Dorsolateral prefrontal cortex (tissue), 120 donors: ENCODE measurements at regions of chr2 and their contacts with region 1.

Region 1: DNA sequence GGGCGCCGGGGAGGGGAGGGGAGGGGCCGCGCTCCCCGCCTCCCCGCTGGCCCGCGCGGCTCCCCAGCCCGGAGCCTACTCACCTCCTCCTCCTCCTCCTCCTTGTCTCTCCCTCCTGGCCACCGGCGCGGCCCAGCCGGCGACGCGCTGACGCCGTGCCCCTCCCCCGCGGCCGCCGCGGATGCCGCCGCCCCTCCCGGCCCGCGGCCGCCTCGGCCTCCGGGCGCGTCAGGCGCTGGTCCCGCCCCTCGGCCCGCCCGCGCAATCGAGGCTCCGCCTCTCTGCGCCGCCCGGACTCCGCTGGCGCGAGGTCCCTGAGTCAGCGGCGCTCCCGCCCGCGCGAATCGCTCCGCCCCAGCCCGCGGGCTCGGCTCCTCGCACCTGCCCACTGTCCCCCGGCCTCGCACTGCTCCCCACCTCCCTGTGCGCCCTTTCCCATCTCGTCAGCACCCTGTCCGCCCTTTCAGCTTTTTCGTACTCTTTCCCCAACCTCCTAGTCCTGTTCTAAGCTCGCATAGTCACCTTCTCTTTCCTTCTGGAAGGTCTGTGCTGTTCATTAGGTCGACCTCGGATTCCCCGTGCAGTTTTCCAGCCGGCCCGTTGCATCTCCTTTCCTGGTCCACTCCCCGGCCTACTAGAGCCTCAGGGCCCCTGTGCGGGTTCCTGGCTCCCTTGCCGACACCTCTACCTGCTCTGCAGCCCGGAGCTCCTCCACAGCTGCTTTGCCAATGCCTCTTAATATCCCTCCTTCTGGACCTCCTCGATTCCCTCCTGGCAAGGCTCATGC is 187.4 kb downstream of the ZEB2 start:
- DNase-seq: peak; percentile 73 to 95 (median 84)
- H3K4me3 ChIP-seq: peak overlapping the region; percentile 57 to 93 (median 85)
- H3K27ac ChIP-seq: peak overlapping the region; percentile 22 to 98 (median 95)
- H3K27me3 ChIP-seq: no peaks in the 10 kb centered on the region
- CTCF ChIP-seq: no peak

Region 2: DNA sequence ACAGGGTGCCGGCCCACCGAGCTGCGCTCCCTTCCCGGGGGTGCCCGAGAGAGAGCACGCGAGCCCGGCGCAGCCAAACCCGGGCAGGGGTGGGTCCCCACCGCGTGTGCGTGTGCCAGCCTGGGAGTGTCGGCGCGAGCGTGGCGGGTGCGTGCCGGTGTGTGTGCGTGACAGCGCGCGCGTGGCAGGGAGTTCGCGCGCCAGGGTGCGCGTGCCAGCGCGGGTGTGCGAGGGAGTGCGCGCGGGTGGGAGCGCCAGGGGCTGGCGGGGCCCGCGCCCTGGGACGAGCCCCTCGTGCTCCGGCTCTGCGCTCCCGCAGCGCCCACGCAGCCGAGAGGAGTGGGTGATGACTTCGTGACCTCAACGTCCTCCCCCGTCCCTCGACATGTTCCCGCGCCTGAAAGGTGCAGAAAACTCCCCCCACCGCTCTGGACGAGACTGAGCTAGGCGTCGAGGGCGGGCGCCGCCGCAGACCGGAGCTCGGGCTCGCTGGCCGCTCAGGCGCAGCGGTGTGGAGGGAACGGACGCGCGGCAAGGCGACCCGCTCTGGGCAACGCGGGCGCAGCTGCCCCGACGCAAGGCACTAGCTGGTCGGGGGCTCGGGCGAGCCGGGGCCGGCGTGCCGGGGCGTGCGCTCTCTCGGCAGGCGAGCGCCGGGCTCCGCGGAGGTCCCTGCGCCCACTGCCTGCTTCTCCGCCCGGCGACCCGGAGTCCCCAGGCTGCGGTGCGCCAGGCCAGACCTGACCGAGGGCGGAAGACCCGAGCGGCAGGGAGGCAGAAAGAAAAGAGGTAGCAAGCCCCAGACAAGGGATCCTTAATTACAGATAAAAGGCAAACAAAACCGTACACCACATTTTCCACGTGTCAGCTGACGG is 395.5 kb before region 1 on chr2:
- intact Hi-C with region 1: loop called in 1 of 2 experiments (anchors 5 kb)
- DNase-seq: peak in 9 of 10 donors; percentile 8 to 73 (median 60)
- H3K4me3 ChIP-seq: peak overlapping the region; percentile 48 to 78 (median 68)
- H3K27ac ChIP-seq: peak overlapping the region in 58 of 59 donors; percentile 3 to 96 (median 84)
- H3K27me3 ChIP-seq: no peaks in the 10 kb centered on the region
- CTCF ChIP-seq: peak in 1 of 56 donors; percentile 10

Region 3: DNA sequence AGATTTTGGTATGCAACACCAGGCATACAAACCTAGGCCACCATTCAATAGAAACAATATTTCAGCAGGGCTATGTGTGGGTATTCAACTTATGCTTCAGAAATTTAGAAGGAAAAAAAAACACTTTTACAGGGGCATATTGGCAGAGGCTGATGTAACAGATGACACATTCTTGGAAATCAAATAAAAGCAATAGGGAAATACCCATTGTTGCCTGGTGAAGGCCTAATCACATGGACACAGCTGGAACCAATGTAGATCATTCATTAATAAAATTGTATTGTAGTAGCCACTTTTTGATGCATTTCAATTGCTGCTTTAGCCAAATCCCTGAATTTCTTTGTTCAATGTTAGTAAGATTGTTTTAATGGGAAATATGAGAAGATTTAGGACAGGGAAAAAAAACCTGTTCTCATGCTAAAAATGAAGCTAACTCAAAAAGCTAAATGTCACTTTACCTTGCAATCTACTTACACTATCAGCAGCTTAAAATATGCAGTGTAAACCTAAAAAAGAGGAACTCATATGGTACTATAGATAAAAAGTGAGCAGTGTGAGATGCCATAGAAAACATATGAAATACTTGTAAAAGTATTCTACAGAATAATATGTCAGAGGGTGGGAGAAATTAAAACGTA is 102.0 kb before region 1 on chr2:
- intact Hi-C with region 1: loop called in 1 of 2 experiments (anchors 5 kb)
- DNase-seq: no peak
- H3K4me3 ChIP-seq: no peak overlapping the region
- H3K27ac ChIP-seq: peak overlapping the region in 1 of 59 donors; percentile 0
- H3K27me3 ChIP-seq: no peaks in the 10 kb centered on the region
- CTCF ChIP-seq: no peak

Region 4: GRCh38 chr2:144382849-144383248 is 50.3 kb after region 1 on chr2:
- intact Hi-C with region 1: loop called (anchors 10 kb)
- DNase-seq: no peak
- H3K4me3 ChIP-seq: no peak overlapping the region
- H3K27ac ChIP-seq: peak overlapping the region in 41 of 59 donors; percentile 0 to 93 (median 74)
- H3K27me3 ChIP-seq: no peaks in the 10 kb centered on the region
- CTCF ChIP-seq: no peak

Region 5: DNA sequence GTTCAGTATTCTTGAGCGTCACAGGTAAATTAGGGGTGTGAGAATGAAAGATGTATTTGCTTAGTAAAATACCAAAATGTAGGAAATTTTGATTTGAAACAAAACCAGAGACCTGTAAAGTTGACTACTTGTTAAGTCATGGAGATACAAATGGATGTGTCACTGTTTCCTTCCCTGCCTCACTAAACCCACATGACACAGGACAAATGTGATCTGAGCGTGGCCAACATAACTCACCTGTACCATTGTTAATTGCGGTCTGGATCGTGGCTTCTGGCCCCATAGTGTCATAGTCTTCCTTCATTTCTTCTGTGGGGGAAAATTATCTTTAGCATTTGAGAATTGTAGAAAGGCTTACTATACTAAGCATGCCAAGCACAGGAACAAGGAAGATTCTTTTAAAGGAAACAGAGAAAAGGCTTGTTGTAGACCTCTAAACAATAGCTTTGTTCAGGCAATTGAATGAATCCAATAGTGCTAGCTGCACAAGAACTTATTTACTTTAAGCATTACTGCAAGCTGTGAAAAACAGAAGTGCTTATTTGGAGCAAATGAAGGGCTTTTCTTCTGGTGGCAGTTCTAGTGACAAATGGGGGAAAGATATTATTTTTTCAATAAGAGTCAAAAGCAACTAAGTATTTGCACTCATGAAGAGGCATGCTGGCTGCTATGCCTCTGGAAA is 92.2 kb after region 1 on chr2:
- intact Hi-C with region 1: loop called (anchors 1 to 5 kb)
- DNase-seq: no peak
- H3K4me3 ChIP-seq: peak overlapping the region in 23 of 59 donors; percentile 0 to 61 (median 16)
- H3K27ac ChIP-seq: peak overlapping the region; percentile 33 to 99 (median 96)
- H3K27me3 ChIP-seq: no peaks in the 10 kb centered on the region
- CTCF ChIP-seq: peak in 5 of 56 donors; percentile 9 to 28 (median 27)

Region 6: GRCh38 chr2:144430722-144431391 is 98.3 kb after region 1 on chr2:
- intact Hi-C with region 1: loop called in 1 of 2 experiments (anchors 5 kb)
- DNase-seq: peak in 1 of 10 donors; percentile 45
- H3K4me3 ChIP-seq: peak overlapping the region; percentile 7 to 64 (median 44)
- H3K27ac ChIP-seq: peak overlapping the region; percentile 82 to 99 (median 96)
- H3K27me3 ChIP-seq: no peaks in the 10 kb centered on the region
- CTCF ChIP-seq: no peak

Region 7: DNA sequence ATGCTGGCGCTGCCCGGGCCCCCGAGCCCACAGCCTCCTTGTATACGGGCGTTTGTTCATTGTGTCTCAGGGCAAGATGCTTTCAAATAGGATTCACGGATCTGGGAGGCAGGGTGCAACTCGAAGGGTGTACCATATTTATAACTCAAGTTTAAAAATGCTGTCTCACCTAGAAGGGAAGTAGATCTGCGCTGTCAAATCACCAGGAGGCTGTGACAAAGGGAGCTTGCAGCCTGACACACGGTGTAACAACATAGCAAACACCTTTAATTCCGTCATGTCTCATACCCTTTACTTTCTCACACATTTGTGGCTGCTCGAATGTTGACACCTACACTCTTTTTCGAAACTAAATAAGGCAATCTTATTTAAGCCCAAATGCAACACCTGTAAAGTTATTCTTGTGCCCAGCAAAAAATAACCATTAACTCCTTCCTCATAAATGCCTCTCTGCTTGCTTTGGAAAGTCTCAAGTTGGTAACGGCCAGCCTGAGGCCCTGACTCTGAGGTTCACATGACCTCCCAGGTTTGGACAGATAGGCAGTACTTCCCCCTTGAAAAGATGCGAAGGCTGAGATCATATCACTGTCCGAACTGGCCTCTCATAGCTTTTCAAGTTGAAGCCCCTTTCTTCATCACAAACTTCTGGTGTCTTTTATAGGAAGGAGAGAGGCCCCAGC is 175.8 kb after region 1 on chr2:
- intact Hi-C with region 1: no loop called
- DNase-seq: peak in 6 of 10 donors; percentile 71 to 85 (median 79)
- H3K4me3 ChIP-seq: peak overlapping the region; percentile 9 to 100 (median 72)
- H3K27ac ChIP-seq: peak overlapping the region; percentile 95 to 100 (median 100)
- H3K27me3 ChIP-seq: no peaks in the 10 kb centered on the region
- CTCF ChIP-seq: peak in 1 of 56 donors; percentile 4